ENCODE measurements at regions of chr4 and their contacts with region 1.

Region 1: GRCh38 chr4:109702950-109703663 is at the start of gene CASP6:
- DNase-seq: peak; percentile 95
- H3K4me3 ChIP-seq: peak within 1 kb of the TSS; percentile 53 to 90 (median 78)
- H3K27ac ChIP-seq: peak within 1 kb of the TSS; percentile 74 to 91 (median 87)
- H3K4me1 ChIP-seq: peaks cover 12 to 42% (median 22%) of the 10 kb centered on the region in 6 donors
- H3K27me3 ChIP-seq: no peaks in the 10 kb centered on the region
- CTCF ChIP-seq: peak; percentile 46 to 88 (median 72)
- POLR2A ChIP-seq: no peak
- total RNA-seq, gene CASP6: 11.5 to 34.5 (median 15.4) TPM

Region 2: GRCh38 chr4:109559983-109560686 is 143.0 kb before region 1 on chr4 and contains the start of gene MCUB:
- intact Hi-C with region 1: loop called (anchors 10 kb)
- DNase-seq: peak; percentile 97
- H3K4me3 ChIP-seq: peak within 1 kb of the TSS; percentile 65 to 92 (median 86)
- H3K27ac ChIP-seq: peak within 1 kb of the TSS; percentile 88 to 95 (median 94)
- H3K4me1 ChIP-seq: peaks cover 9 to 63% (median 30%) of the 10 kb centered on the region in 6 donors
- H3K27me3 ChIP-seq: peaks cover 0 to 14% (median 0%) of the 10 kb centered on the region in 7 donors
- CTCF ChIP-seq: peak in 3 of 11 experiments; percentile 27 to 32 (median 28)
- POLR2A ChIP-seq: peak in 1 of 3 donors; percentile 80
- total RNA-seq, gene MCUB: 22.1 to 65.5 (median 29.2) TPM

Region 3: DNA sequence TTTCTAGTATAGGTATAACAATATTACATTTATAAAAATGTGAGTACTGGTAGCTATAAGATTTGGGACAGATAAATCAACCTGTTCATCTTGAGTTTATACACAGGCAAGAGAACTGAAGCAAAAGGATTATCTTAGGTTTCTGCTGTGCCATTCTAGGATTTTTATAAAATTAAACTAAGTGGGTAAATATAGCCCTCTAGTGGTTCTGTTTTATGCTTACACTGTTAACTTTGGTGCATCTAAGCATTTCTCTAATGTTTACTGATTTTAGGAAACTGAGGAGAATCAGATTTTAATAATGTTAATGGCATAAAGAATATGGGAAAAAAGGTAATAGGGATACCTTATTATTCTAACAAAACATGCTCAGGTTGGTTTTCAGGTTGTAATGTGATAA is 123.6 kb after region 1 on chr4:
- intact Hi-C with region 1: loop called (anchors 10 kb)
- DNase-seq: no peak
- H3K4me3 ChIP-seq: no peak overlapping the region
- H3K27ac ChIP-seq: no peak overlapping the region
- H3K4me1 ChIP-seq: no peaks in the 10 kb centered on the region
- H3K27me3 ChIP-seq: no peaks in the 10 kb centered on the region
- CTCF ChIP-seq: peak; percentile 12 to 65 (median 46)
- POLR2A ChIP-seq: no peak